ENCODE measurements at regions of chr6 and their contacts with region 1.

Region 1: DNA sequence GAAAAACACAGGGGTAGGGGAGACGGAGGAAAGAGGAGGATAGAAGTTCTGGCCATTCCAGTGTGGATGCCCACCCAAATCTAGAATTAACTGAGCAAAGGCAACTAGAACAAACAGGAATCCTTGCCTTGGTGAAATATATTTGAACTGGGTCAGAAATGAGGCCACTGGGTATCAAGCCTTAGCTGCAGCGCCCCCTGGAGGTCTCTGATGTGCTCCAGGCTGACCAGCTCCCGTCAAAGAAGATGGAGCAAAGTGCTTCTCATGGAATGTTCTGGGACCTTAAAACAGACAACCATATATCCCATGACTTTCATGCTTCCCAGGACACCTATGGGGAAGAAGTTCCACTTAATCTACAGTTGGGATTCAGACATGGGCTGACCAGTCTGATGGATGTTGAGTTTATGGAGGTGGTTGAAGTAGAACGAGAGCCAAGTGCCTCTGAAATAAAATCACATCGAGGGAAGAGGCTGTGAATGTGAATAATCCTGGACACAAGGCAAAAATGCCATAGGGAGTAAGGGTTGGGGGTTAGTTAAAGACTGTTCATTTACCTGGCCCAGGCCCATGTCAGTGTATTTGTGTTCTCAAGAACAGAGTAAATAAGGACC is 50.4 kb downstream of the HLA-DPB1 start:
- DNase-seq: no peak
- ATAC-seq: no peak
- H3K4me3 ChIP-seq: no peak overlapping the region
- H3K27ac ChIP-seq: no peak overlapping the region
- H3K4me1 ChIP-seq: no peaks in the 10 kb centered on the region
- H3K27me3 ChIP-seq: peaks cover 5% of the 10 kb centered on the region
- CTCF ChIP-seq: peak; percentile 78

Region 2: GRCh38 chr6:31940256-31940664 is 1185.9 kb before region 1 on chr6:
- CTCF ChIA-PET with region 1: interaction called, 10 read pairs
- POLR2A ChIA-PET with region 1: no interaction called
- in situ Hi-C with region 1: no loop called
- intact Hi-C with region 1: no loop called
- DNase-seq: no peak
- ATAC-seq: no peak
- H3K4me3 ChIP-seq: no peak overlapping the region
- H3K27ac ChIP-seq: 0 out of 2 replicates have a peak overlapping the region, but pooled peaks have one; percentile 20
- H3K4me1 ChIP-seq: peaks cover 10% of the 10 kb centered on the region
- H3K27me3 ChIP-seq: no peaks in the 10 kb centered on the region
- CTCF ChIP-seq: no peak

Region 3: DNA sequence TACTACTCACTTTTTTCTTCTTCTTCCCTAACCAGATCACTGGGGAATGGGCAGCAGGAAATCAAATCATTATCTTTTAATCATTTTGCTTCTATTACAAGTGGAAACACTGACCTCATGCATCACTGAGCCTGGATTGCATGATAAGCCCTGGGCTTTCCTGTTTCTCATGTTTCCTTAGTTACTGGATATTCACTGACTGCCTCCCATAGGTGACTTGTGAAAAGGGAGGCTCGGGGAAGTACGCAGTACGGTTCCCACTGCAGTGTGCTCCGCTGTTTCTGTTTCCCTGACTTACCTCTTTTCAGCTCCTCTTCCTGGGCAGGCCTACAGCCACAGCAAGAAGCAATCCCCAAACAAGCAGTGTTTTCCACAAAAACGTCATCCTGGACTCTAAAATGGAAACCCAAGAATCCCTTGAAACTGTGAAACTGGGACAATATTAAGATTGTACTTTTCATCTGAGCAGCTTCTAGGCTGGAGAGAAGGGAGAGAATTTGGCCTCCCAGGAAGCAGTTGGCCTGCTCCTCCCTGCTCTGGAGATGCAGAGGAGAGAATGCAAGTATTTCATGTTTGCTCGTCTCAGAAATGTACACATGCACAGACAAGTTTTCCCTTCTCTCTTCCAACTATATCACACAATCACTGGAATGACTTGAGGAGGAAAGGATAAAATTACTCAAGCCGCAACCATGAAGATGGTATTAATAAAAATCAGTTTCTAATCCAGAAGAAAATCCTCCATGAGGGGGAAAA is 732.4 kb before region 1 on chr6:
- CTCF ChIA-PET with region 1: no interaction called
- POLR2A ChIA-PET with region 1: interaction called, 15 read pairs
- in situ Hi-C with region 1: no loop called
- intact Hi-C with region 1: no loop called
- DNase-seq: no peak
- ATAC-seq: no peak
- H3K4me3 ChIP-seq: no peak overlapping the region
- H3K27ac ChIP-seq: no peak overlapping the region
- H3K4me1 ChIP-seq: no peaks in the 10 kb centered on the region
- H3K27me3 ChIP-seq: no peaks in the 10 kb centered on the region; the same call in 1 of the 2 replicates
- CTCF ChIP-seq: no peak

Region 4: GRCh38 chr6:33172688-33173534 is 46.7 kb after region 1 on chr6:
- CTCF ChIA-PET with region 1: interaction called, 4 read pairs
- POLR2A ChIA-PET with region 1: no interaction called
- in situ Hi-C with region 1: no loop called
- intact Hi-C with region 1: loop called (anchors 10 kb)
- DNase-seq: no peak
- ATAC-seq: peak; percentile 79
- H3K4me3 ChIP-seq: no peak overlapping the region
- H3K27ac ChIP-seq: no peak overlapping the region
- H3K4me1 ChIP-seq: peaks cover 6% of the 10 kb centered on the region
- H3K27me3 ChIP-seq: no peaks in the 10 kb centered on the region
- CTCF ChIP-seq: peak; percentile 91

Measured in Panc1 (cell line).